ENCODE measurements at regions of chr1 and their contacts with region 1.

Region 1: DNA sequence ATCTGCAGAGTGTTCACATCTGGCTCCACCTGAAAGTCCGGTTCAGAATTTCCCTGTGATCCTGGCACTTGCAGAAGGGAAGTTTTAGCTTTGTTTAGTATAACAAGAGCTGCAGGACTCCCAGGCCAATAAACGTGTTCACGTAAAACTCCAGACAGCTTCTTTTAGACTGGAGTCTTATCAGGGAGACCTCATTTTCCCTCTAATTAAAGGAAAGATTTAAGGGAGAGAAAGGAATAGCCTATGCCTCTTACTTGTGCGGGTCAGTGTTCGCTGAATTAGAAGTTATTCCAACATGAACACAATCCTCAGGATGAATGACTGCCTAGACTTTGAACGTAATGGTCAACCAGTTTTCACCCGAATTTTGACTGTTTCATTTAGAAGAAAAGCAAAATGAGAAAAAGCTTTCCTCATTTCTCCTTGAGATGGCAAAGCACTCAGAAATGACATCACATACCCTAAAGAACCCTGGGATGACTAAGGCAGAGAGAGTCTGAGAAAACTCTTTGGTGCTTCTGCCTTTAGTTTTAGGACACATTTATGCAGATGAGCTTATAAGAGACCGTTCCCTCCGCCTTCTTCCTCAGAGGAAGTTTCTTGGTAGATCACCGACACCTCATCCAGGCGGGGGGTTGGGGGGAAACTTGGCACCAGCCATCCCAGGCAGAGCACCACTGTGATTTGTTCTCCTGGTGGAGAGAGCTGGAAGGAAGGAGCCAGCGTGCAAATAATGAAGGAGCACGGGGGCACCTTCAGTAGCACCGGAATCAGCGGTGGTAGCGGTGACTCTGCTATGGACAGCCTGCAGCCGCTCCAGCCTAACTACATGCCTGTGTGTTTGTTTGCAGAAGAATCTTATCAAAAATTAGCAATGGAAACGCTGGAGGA is 202.1 kb upstream of the SGIP1 start:
- DNase-seq: peak in 9 of 10 donors; percentile 17 to 64 (median 39)
- ATAC-seq: peak; percentile 7 to 27
- H3K4me3 Mint-ChIP-seq: peak overlapping the region; percentile 93 to 100 (median 98)
- H3K27ac Mint-ChIP-seq: peak overlapping the region; percentile 95 to 100 (median 99)
- H3K4me1 Mint-ChIP-seq: peaks cover 21 to 77% (median 54%) of the 10 kb centered on the region in 4 donors
- H3K27me3 Mint-ChIP-seq: no peaks in the 10 kb centered on the region

Region 2: DNA sequence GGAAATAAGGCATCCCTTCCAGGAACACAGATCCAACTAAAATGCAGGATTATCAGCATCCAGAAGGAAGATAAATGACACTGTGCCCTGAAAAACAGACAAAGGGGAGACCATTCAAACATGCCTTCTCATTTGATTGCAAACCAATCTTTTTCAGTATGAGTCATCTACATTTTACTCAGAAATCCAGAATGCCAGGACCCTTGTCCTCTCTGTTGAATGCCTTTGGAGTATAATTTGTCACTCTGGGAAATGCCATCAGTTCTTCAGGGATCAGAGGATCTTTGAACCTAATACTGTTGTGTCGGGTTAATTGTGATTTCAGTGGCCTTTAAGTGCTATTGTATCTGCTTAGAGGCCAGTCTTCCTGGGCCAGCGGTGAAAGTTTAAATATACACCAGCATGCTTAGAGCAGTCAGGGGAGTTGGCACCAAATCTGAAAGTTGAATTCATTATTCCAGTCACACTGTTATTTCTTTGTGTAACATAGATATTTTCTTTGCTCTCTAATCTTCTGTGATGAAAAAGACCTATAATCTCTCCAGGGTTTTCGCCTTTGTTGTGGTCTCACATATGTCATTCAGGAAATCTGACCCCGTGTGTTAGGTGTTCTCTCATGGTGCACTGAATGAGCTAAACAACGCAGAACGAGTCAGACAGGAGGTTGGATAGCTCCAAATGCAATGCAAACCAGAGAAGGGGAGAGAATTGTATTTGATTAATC is 162.8 kb before region 1 on chr1:
- POLR2A ChIA-PET with region 1: no interaction called
- DNase-seq: peak in 4 of 10 donors; percentile 9 to 52 (median 22)
- ATAC-seq: peak; percentile 64 to 91
- H3K4me3 Mint-ChIP-seq: no peak overlapping the region
- H3K27ac Mint-ChIP-seq: peak overlapping the region in 3 of 10 donors; percentile 15 to 30 (median 28)
- H3K4me1 Mint-ChIP-seq: peaks cover 6 to 19% (median 11%) of the 10 kb centered on the region in 4 donors
- H3K27me3 Mint-ChIP-seq: peaks cover 0 to 20% (median 4%) of the 10 kb centered on the region in 5 donors

Region 3: GRCh38 chr1:66282343-66282852 is 49.5 kb before region 1 on chr1:
- POLR2A ChIA-PET with region 1: interaction called, 11 read pairs
- DNase-seq: peak in 9 of 10 donors; percentile 36 to 80 (median 51)
- ATAC-seq: peak; percentile 93 to 96
- H3K4me3 Mint-ChIP-seq: peak overlapping the region in 5 of 10 donors; percentile 12 to 48 (median 34)
- H3K27ac Mint-ChIP-seq: peak overlapping the region; percentile 66 to 87 (median 77)
- H3K4me1 Mint-ChIP-seq: peaks cover 42 to 90% (median 83%) of the 10 kb centered on the region in 4 donors
- H3K27me3 Mint-ChIP-seq: no peaks in the 10 kb centered on the region

Region 4: DNA sequence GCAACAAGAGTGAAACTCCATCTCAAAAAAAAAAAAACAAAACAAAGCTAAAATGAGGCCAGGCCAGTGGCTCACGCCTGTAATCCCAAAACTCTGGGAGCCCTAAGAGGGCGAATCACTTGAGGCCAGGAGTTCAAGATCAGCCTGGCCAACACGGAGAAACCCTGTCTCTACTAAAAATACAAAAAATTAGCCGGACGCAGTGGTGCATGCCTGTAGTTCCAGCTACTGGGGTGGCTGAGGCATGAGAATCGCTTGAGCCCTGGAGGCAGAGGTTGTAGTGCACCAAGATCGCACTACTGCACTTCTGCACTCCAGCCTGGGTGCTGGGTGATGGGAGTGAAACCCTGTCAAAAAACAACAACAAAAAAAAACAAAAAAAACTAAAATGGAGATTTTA is 10.8 kb after region 1 on chr1:
- POLR2A ChIA-PET with region 1: interaction called, 18 read pairs
- DNase-seq: no peak
- ATAC-seq: peak in 1 of 2 donors; percentile 35
- H3K4me3 Mint-ChIP-seq: peak overlapping the region in 9 of 10 donors; percentile 7 to 72 (median 48)
- H3K27ac Mint-ChIP-seq: peak overlapping the region in 7 of 10 donors; percentile 43 to 95 (median 77)
- H3K4me1 Mint-ChIP-seq: peaks cover 22 to 86% (median 72%) of the 10 kb centered on the region in 4 donors
- H3K27me3 Mint-ChIP-seq: no peaks in the 10 kb centered on the region

Region 5: DNA sequence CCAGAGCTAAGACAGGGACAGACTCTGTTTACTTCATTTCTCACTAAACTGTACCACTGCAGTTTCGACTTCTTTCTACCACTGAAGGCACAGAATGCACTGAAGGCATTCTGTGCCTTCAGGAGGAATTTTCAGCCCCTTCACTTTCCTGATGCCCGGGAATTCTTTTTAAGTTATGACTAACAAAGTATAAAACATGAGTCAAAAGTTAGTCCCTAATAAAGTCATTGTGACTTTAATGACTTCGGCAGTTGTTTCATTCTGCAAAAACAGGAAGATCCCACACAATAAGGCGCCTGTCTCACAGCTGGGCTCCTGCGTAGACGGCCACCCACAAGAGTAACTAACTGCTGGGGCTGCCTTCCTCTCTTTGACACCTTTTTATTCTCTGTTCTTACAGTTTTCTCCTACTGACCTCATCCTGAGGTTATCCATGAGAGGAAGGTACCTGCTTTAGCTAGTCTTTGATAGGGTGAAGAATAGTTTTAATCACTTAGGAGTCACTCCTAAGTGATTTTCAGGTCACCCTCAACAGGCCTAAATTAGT is 18.2 kb after region 1 on chr1:
- POLR2A ChIA-PET with region 1: interaction called, 22 read pairs
- DNase-seq: peak in 8 of 10 donors; percentile 25 to 79 (median 70)
- ATAC-seq: peak; percentile 76 to 85
- H3K4me3 Mint-ChIP-seq: peak overlapping the region; percentile 55 to 83 (median 72)
- H3K27ac Mint-ChIP-seq: peak overlapping the region; percentile 63 to 97 (median 94)
- H3K4me1 Mint-ChIP-seq: peaks cover 48 to 96% (median 89%) of the 10 kb centered on the region in 4 donors
- H3K27me3 Mint-ChIP-seq: no peaks in the 10 kb centered on the region

Region 6: DNA sequence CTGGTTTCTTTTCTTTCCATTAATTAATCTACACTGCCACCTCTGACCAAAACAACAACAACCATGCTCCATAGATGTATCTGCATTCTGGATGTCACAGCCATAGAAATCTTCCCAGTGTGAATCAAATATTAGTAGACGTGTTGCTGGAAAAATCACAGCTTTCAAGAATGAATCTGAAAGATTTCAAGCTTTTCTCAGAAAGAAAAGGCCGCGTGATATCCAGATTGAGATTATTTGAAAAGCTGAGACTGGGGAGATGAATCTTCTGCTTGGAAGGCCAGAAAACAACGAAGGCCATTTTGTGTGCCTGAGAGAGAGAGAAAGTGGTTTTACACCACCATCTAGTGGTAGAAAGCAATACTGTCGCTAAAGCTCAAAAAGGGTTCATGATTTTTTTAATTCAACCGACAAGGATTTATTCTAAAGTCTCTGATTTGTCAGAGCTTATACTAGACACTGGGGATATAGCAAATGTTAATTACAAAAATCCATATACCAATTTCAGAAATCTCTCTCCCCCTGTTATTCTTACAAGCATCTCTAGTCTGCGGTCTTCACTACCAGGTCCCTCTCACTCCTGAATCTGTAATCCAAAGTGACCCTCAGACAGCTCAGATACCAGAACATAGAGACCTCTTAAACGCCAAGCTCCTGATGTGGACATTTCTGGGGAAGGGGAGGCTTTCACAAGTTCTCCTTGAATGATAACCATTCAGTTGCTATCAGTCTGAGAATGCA is 114.5 kb after region 1 on chr1:
- POLR2A ChIA-PET with region 1: interaction called, 23 read pairs
- DNase-seq: peak in 8 of 10 donors; percentile 17 to 81 (median 62)
- ATAC-seq: peak; percentile 62 to 71
- H3K4me3 Mint-ChIP-seq: peak overlapping the region; percentile 58 to 81 (median 74)
- H3K27ac Mint-ChIP-seq: peak overlapping the region; percentile 92 to 98 (median 96)
- H3K4me1 Mint-ChIP-seq: peaks cover 15 to 24% (median 23%) of the 10 kb centered on the region in 4 donors
- H3K27me3 Mint-ChIP-seq: peaks cover 0 to 5% (median 1%) of the 10 kb centered on the region in 5 donors